ENCODE measurements at regions of chr19 and their contacts with region 1.

Region 1: DNA sequence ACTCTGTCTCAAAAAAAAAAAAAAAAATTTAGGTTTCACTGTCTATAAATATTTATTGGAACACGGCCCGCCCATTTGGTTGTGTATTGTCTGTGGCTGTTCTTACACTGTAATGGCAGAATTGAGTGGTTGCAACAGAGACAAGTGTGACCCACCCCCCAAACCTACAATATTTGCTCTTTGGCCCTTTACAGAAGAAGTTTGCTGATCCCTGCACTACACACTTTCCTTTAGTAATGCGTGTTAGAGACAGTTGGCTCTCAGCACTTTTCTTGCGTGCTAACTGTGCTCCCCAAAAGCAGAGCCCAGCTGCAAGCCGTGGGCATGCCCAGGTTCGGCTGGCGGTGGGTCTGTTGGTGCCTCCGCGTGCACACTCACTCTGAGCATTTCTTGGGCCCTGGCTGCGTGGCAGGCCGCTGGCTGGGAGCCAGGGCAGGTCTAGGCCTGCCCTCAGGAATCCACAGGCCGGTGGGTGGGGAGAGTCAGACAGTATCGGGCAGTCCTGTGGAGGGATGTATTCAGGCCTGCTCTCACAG is 72.6 kb downstream of the SIPA1L3 start:
- DNase-seq: no peak
- ATAC-seq: no peak
- H3K4me3 ChIP-seq: no peak overlapping the region
- H3K27ac ChIP-seq: no peak overlapping the region
- H3K4me1 ChIP-seq: peaks cover 3% of the 10 kb centered on the region; the same call in 1 of the 2 replicates
- H3K27me3 ChIP-seq: no peaks in the 10 kb centered on the region
- CTCF ChIP-seq: no peak

Region 2: DNA sequence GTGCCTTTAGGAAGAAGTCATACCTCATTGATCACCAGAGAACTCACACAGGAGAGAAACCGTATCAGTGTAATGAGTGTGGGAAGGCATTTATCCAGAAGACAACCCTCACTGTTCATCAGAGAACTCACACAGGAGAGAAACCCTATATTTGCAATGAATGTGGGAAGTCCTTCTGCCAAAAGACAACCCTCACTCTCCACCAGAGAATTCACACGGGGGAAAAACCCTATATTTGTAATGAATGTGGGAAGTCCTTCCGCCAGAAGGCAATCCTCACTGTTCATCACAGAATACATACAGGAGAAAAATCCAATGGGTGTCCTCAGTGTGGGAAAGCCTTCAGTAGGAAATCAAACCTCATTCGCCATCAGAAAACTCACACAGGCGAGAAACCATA is 1352.6 kb before region 1 on chr19:
- CTCF ChIA-PET with region 1: no interaction called
- POLR2A ChIA-PET with region 1: no interaction called
- in situ Hi-C with region 1: no loop called
- intact Hi-C with region 1: no loop called
- DNase-seq: no peak
- ATAC-seq: no peak
- H3K4me3 ChIP-seq: no peak overlapping the region
- H3K27ac ChIP-seq: no peak overlapping the region
- H3K4me1 ChIP-seq: no peaks in the 10 kb centered on the region
- H3K27me3 ChIP-seq: no peaks in the 10 kb centered on the region
- CTCF ChIP-seq: no peak

Region 3: DNA sequence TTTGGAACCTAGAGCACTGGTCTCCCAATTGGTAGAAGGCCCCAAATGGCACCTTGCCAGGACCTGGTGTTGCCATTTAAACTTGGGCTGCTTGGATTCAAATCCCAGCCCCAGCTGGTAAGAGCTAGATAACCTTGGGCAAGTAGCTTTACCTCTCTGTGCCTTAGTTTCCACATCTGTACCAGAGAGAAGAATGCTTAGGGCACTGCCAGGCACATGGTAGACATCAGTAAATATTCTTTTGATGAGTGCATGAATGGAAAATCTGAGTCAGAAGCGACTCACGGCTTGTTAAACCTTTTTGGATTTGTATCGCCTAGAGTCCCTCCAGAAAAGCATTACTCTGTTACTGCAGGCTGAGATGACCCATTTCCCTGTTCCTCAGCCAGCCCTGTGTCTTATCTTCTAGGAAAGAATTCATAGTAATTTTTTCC is 18.3 kb after region 1 on chr19:
- CTCF ChIA-PET with region 1: interaction called, 11 read pairs
- POLR2A ChIA-PET with region 1: no interaction called
- in situ Hi-C with region 1: no loop called
- intact Hi-C with region 1: no loop called
- DNase-seq: peak; percentile 90
- ATAC-seq: peak; percentile 78
- H3K4me3 ChIP-seq: no peak overlapping the region
- H3K27ac ChIP-seq: peak overlapping the region; percentile 9; the same call in 1 of the 2 replicates
- H3K4me1 ChIP-seq: peaks cover 8% of the 10 kb centered on the region
- H3K27me3 ChIP-seq: no peaks in the 10 kb centered on the region
- CTCF ChIP-seq: no peak

Region 4: DNA sequence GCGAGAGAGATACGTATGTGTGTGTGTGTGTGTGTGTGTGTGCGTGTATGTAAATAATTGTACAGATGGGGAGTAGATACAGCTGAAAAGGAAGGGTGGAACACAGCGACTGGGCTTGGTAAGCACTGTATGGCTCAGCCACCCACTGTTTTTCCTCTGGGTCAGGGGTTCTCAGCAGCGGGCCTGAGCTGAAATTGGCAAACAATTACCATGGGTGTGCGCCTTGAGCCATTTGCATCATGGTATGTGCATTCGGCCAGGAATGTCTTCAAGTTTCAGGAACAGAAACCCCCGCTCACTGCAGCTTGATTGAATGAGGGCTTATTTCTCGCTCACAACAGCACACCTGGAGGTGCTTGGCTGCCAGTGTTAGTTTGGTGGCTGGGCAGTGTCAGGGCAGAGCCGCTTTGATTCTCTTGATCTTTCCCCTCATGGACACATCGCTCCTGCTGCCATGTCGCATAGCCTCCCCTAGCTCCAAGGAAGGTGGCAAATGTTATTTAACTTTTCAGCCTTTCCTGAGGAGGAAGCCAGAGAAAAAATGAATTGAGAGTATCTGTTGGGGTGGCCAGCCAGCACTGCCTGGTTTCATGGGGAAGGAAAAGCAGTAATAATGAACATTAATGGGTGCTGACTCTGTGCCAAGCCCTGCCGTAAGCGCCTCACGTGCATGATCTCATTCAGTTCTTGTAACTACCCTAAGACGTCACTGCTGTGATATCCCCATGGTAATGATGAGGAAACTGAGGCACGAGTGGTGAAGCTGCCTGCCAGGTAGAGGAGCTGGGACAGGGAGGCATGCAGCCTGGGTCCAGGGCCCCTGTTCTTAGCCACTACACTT is 54.3 kb after region 1 on chr19:
- CTCF ChIA-PET with region 1: no interaction called
- POLR2A ChIA-PET with region 1: no interaction called
- in situ Hi-C with region 1: no loop called
- intact Hi-C with region 1: no loop called
- DNase-seq: no peak
- ATAC-seq: no peak
- H3K4me3 ChIP-seq: no peak overlapping the region
- H3K27ac ChIP-seq: no peak overlapping the region
- H3K4me1 ChIP-seq: no peaks in the 10 kb centered on the region; the same call in 1 of the 2 replicates
- H3K27me3 ChIP-seq: no peaks in the 10 kb centered on the region
- CTCF ChIP-seq: no peak